ENCODE measurements at regions of chr16 and their contacts with region 1.

Region 1: GRCh38 chr16:53773150-53773846 is 69.3 kb downstream of the FTO start:
- DNase-seq: peak; percentile 81
- H3K4me3 Mint-ChIP-seq: no peak overlapping the region
- H3K27ac Mint-ChIP-seq: no peak overlapping the region
- H3K4me1 Mint-ChIP-seq: peaks cover 43% of the 10 kb centered on the region
- H3K27me3 Mint-ChIP-seq: no peaks in the 10 kb centered on the region
- CTCF ChIP-seq: peak; percentile 60

Region 2: GRCh38 chr16:53703590-53704444 is 69.5 kb before region 1 on chr16 and contains the starts of genes FTO and RPGRIP1L:
- CTCF ChIA-PET with region 1: interaction called, 3 read pairs
- POLR2A ChIA-PET with region 1: interaction called, 11 read pairs
- intact Hi-C with region 1: loop called (anchors 1 kb)
- DNase-seq: peak; percentile 99
- H3K4me3 Mint-ChIP-seq: peak within 1 kb of the TSS; percentile 100
- H3K27ac Mint-ChIP-seq: peak within 1 kb of the TSS; percentile 96
- H3K4me1 Mint-ChIP-seq: peaks cover 9% of the 10 kb centered on the region
- H3K27me3 Mint-ChIP-seq: no peaks in the 10 kb centered on the region
- CTCF ChIP-seq: no peak
- total RNA-seq, gene FTO: 55.0 and 67.7 TPM in 2 replicates
- total RNA-seq, gene RPGRIP1L: 13.4 and 17.3 TPM in 2 replicates

Region 3: GRCh38 chr16:53817117-53817755 is 43.9 kb after region 1 on chr16:
- CTCF ChIA-PET with region 1: interaction called, 5 read pairs
- POLR2A ChIA-PET with region 1: interaction called, 23 read pairs
- intact Hi-C with region 1: no loop called
- DNase-seq: peak; percentile 89
- H3K4me3 Mint-ChIP-seq: no peak overlapping the region
- H3K27ac Mint-ChIP-seq: peak overlapping the region; percentile 74
- H3K4me1 Mint-ChIP-seq: peaks cover 31% of the 10 kb centered on the region
- H3K27me3 Mint-ChIP-seq: no peaks in the 10 kb centered on the region
- CTCF ChIP-seq: no peak

Region 4: GRCh38 chr16:53913099-53913870 is 140.0 kb after region 1 on chr16:
- CTCF ChIA-PET with region 1: interaction called, 3 read pairs
- POLR2A ChIA-PET with region 1: interaction called, 12 read pairs
- intact Hi-C with region 1: no loop called
- DNase-seq: peak; percentile 97
- H3K4me3 Mint-ChIP-seq: no peak overlapping the region
- H3K27ac Mint-ChIP-seq: peak overlapping the region; percentile 35
- H3K4me1 Mint-ChIP-seq: peaks cover 16% of the 10 kb centered on the region
- H3K27me3 Mint-ChIP-seq: no peaks in the 10 kb centered on the region
- CTCF ChIP-seq: no peak

Region 5: DNA sequence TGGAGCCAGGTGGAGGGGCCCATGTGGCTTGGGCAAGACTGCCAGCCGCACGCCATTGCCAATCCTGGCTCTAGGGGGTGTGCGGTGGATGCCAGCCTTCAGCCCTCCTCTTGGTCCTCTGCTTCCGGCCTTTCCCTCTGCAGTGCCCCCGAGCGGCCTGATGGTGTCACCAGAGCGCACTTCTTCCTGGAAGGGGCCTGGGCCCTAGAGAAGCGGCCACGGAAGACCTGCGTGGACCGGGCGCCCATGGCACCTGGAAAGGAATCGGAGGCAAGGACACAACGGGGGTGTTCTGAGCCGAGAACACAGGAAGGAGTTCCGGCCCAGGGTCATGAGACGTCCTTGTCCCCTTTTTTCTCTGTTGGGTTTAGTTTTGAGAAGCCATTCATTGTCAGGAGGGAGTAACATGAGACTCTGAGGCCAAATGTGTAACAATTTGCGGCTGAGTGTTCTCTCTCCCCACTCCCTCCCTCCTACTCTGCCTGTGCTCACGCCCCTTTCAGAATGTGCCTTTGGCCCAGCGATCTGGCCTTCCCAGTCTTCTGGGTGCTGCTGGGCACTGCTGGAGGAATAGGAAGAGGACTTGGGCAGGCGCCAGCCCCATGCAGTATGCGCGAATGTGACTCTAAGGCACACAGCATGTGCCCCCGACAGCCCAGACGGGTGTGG is 420.5 kb after region 1 on chr16:
- CTCF ChIA-PET with region 1: no interaction called
- POLR2A ChIA-PET with region 1: no interaction called
- intact Hi-C with region 1: loop called (anchors 5 kb)
- DNase-seq: peak; percentile 86
- H3K4me3 Mint-ChIP-seq: peak overlapping the region; percentile 55
- H3K27ac Mint-ChIP-seq: peak overlapping the region; percentile 90
- H3K4me1 Mint-ChIP-seq: peaks cover 5% of the 10 kb centered on the region
- H3K27me3 Mint-ChIP-seq: no peaks in the 10 kb centered on the region
- CTCF ChIP-seq: peak; percentile 83

Region 6: DNA sequence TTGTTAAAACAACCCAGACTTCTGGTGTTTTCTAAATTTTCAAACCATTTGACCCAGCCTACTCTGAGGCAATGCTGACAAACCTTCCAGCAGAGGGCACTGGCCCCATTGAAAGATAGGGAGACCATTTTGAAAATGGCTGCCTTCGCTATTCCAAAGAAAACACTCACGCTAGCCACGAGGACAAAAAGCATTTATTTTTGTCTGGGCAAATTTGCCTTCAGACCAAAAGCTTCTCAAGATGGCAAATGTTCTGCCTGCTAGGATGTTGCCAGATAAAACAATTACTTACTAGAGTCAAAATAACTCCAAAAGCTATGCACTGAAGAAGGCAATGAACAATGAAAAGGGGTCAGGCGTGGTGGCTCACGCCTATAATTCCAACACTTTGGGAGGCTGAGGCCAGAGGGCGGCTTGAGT is 860.7 kb after region 1 on chr16:
- CTCF ChIA-PET with region 1: interaction called, 4 read pairs
- POLR2A ChIA-PET with region 1: interaction called, 3 read pairs
- intact Hi-C with region 1: loop called (anchors 5 kb)
- DNase-seq: peak; percentile 78
- H3K4me3 Mint-ChIP-seq: no peak overlapping the region
- H3K27ac Mint-ChIP-seq: no peak overlapping the region
- H3K4me1 Mint-ChIP-seq: peaks cover 8% of the 10 kb centered on the region
- H3K27me3 Mint-ChIP-seq: no peaks in the 10 kb centered on the region
- CTCF ChIP-seq: peak; percentile 76

Region 7: GRCh38 chr16:54929090-54930004 is 1156.0 kb after region 1 on chr16:
- CTCF ChIA-PET with region 1: interaction called, 5 read pairs
- POLR2A ChIA-PET with region 1: interaction called, 46 read pairs
- intact Hi-C with region 1: loop called (anchors 1 kb)
- DNase-seq: peak; percentile 99
- H3K4me3 Mint-ChIP-seq: peak overlapping the region; percentile 88
- H3K27ac Mint-ChIP-seq: peak overlapping the region; percentile 97
- H3K4me1 Mint-ChIP-seq: peaks cover 21% of the 10 kb centered on the region
- H3K27me3 Mint-ChIP-seq: no peaks in the 10 kb centered on the region
- CTCF ChIP-seq: peak; percentile 17